Activated CD4-positive, alpha-beta T cell treated with anti-CD3 and anti-CD28 coated beads, Interleukin-2, amount 10 ng/mL, durations not matched to agents 24 days and 14 days (primary cell): ENCODE measurements at regions of chr14 and their contacts with region 1.

Region 1: GRCh38 chr14:68663385-68664076 is 129.3 kb downstream of the ZFP36L1 start:
- DNase-seq: peak; percentile 77
- H3K4me3 Mint-ChIP-seq: peak overlapping the region; percentile 55
- H3K27ac Mint-ChIP-seq: peak overlapping the region; percentile 59
- H3K4me1 Mint-ChIP-seq: peaks cover 36% of the 10 kb centered on the region
- H3K27me3 Mint-ChIP-seq: peaks cover 4% of the 10 kb centered on the region

Region 2: DNA sequence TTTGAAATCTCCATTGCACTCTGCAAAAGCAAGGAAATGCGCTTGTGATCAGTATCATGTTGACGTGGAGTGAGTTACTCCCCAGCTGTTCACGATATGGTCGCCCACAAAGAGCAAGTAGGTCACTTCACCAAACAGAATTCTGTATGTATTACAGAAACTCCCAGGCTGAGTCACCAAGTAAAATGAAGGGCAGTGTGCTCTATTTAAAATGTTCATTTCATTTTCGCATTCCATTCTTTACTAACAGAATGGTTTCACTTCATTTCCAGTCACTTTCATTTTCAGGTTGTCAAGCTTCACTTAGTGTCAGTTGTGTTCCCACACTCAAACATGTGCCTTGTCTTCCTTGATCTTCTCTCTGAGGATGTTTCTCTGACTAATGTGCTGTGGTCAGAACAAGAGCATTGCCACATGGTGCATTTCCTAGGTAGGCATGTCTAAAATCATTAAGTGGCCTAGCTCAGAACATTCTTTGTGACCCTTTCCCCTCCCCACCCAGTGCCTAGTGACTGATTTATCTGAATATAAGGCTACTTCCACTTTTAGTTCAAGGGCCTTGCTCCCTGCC is 452.7 kb before region 1 on chr14:
- intact Hi-C with region 1: loop called (anchors 1 kb)
- DNase-seq: peak; percentile 86
- H3K4me3 Mint-ChIP-seq: peak overlapping the region; percentile 80
- H3K27ac Mint-ChIP-seq: peak overlapping the region; percentile 87
- H3K4me1 Mint-ChIP-seq: peaks cover 45% of the 10 kb centered on the region
- H3K27me3 Mint-ChIP-seq: no peaks in the 10 kb centered on the region

Region 3: GRCh38 chr14:68283378-68284123 is 380.0 kb before region 1 on chr14:
- intact Hi-C with region 1: loop called (anchors 10 kb)
- DNase-seq: peak; percentile 88
- H3K4me3 Mint-ChIP-seq: peak overlapping the region; percentile 62
- H3K27ac Mint-ChIP-seq: peak overlapping the region; percentile 83
- H3K4me1 Mint-ChIP-seq: peaks cover 57% of the 10 kb centered on the region
- H3K27me3 Mint-ChIP-seq: no peaks in the 10 kb centered on the region

Region 4: GRCh38 chr14:68695326-68695768 is 31.8 kb after region 1 on chr14:
- intact Hi-C with region 1: loop called (anchors 2 kb)
- DNase-seq: no peak
- H3K4me3 Mint-ChIP-seq: peak overlapping the region; percentile 18
- H3K27ac Mint-ChIP-seq: peak overlapping the region; percentile 72
- H3K4me1 Mint-ChIP-seq: peaks cover 20% of the 10 kb centered on the region
- H3K27me3 Mint-ChIP-seq: peaks cover 7% of the 10 kb centered on the region

Region 5: DNA sequence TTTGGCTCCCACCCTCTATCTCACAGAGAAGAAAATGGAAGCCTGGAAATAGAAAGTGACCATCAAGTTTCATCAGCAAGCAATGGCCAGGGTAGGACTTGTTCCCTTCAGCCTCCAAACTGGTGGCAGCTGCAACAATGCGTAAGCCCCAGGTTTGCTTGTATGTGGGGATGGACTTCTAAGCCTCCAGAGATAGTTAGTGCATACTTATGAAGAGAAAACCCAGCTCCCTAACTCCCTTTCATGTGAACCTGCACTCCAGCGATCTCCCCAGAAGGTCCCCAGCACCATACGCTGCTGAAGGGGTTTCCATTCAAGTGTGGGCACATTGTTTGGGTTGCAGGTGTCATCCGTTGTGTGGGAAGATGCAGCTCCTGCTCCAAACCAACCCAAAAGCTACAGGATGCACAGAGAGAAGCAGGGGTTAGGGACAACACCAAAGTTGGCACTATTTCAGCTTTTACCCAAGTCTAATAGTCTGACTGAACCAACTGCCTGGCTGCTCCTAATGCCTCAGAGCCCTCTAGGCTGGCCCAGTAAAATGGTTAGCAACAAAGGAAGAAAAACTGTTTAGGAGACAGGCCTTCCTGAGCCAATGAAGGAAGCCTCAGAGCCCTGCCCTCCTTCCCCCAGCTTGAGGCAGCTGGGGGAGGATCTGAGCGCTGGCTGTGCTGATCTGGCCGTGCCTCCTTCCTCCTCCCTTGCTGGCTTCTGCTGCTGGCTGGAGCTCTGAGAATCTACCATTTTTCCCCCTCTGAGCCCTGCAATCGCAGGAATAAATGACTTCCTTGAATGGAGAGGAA is 117.0 kb after region 1 on chr14:
- intact Hi-C with region 1: loop called (anchors 2 kb)
- DNase-seq: peak; percentile 84
- H3K4me3 Mint-ChIP-seq: peak overlapping the region; percentile 76
- H3K27ac Mint-ChIP-seq: peak overlapping the region; percentile 95
- H3K4me1 Mint-ChIP-seq: peaks cover 64% of the 10 kb centered on the region
- H3K27me3 Mint-ChIP-seq: no peaks in the 10 kb centered on the region